ENCODE measurements at regions of chr6 and their contacts with region 1.

Region 1: DNA sequence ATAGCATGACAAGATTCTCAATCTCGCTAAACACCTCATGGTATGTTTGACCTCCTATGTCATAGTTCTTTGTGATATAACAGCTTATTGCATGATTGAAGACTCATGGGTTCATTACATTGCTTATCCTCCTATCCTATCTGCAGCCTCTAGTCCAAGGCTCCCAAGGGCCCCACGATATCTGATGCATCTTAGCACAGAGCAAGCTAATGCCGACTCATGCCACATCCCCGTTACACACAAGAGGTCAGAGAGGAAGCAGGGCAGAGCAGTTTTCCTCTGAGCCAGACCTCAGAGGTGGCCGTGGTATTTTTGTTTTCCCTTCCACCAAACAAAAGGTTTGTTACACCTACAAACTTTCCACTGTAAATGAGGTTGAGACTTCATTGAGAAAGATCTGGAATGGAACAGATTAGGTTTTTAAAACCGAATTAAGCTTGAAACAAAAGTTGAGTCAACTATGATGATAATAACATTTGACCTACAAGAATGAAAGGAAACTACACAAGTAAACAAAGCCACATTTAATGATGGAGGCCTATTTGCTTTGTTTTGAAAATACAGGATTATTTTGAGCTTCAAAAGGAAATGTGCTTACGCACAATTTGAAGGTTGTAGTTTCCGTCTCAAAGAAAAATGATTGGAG is 133.9 kb upstream of the MYLIP start:
- DNase-seq: no peak
- H3K4me3 Mint-ChIP-seq: no peak overlapping the region
- H3K27ac Mint-ChIP-seq: peak overlapping the region; percentile 81
- H3K4me1 Mint-ChIP-seq: peaks cover 22% of the 10 kb centered on the region
- H3K27me3 Mint-ChIP-seq: peaks cover 8% of the 10 kb centered on the region

Region 2: DNA sequence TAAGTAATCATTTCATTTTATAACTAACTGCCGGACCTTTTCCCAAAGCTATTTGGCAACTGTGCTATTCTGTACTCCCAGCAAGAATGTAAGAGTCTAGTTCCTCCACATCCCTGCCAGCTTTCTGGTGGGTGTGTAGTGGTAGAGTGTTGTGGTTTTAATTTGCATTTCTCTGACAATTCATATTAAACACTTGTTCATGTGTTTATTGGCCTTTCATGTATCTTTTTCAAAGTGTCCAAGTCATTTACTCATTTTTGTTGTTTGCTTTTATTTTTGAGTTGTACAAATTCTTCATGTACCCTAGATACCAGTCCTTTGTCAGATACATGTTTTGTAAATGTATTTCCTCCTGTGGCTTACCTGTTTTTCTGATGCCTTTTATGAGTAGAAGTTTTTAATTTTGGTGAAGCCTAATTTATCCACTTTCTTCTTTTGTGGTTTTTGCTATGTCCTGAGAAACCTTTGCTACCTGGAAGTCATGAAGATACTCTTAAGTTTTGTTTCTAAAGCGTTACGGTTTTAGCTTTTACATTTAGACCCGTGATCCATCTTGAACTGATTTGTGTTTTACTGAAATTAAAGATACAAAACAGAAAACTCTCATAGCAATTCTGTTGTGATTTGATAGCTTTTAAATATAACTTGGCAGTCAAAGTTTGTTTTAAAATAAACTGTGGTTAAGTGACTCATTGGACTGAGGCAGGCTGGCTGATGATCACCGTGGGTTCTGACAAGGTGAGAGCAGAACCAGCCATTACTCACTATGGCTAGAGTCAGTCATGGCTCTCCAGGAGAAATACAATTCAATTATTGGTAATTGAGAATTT is 141.9 kb after region 1 on chr6:
- intact Hi-C with region 1: loop called (anchors 5 kb)
- DNase-seq: no peak
- H3K4me3 Mint-ChIP-seq: peak overlapping the region; percentile 73
- H3K27ac Mint-ChIP-seq: peak overlapping the region; percentile 95
- H3K4me1 Mint-ChIP-seq: peaks cover 78% of the 10 kb centered on the region
- H3K27me3 Mint-ChIP-seq: no peaks in the 10 kb centered on the region